ENCODE measurements at regions of chr14 and their contacts with region 1.

Region 1: GRCh38 chr14:21557084-21557901 is 22.6 kb downstream of the OR10G3 start:
- DNase-seq: peak; percentile 69 to 77
- H3K4me3 ChIP-seq: peak overlapping the region; percentile 43 to 44
- H3K27ac ChIP-seq: peak overlapping the region; percentile 49 to 73
- H3K4me1 ChIP-seq: peaks cover 0 to 6% (median 2%) of the 10 kb centered on the region in 4 donors
- H3K27me3 ChIP-seq: no peaks in the 10 kb centered on the region
- CTCF ChIP-seq: peak; percentile 58 to 77

Region 2: GRCh38 chr14:21502926-21503325 is 54.4 kb before region 1 on chr14:
- intact Hi-C with region 1: loop called (anchors 5 kb)
- DNase-seq: no peak
- H3K4me3 ChIP-seq: no peak overlapping the region
- H3K27ac ChIP-seq: no peak overlapping the region
- H3K4me1 ChIP-seq: peaks cover 0 to 6% (median under 1%) of the 10 kb centered on the region in 4 donors
- H3K27me3 ChIP-seq: no peaks in the 10 kb centered on the region
- CTCF ChIP-seq: no peak

Region 3: DNA sequence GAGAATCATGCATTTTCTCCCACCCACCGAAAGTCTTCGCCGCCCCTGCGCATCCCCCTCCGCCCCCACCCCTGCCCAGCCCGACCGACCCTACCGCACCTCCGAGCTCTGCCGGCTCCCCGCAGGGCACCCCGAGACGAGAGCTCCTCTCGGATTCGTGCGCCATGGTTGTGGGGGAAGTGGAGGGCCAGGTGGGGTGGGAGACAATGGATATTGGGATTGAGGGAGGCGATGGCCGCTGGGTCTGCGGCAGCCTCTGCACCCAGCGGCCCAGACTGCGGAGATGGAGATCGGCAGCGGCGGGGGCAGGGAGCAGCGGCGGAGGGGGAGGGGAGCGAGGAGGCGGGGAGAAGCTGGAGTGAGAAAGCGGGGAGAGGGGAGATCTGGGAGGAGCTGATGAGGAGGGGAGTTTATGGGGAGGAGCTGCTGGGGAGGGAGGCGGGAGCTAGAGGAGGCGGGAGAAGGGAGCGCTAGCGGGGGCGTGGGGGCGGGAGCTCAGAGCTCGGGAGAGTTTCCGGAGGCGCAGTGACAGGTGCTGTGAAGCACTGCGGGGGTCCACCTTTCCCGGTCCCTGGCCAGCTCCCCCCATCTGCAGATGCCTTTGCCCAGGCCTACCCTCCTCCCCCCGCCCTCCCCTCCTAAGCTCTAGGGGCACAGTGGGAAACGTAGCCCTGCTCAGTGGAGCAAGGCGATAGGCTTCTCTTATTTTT is 31.2 kb before region 1 on chr14 and contains the start of gene SALL2:
- intact Hi-C with region 1: no loop called
- DNase-seq: peak; percentile 65 to 86
- H3K4me3 ChIP-seq: peak within 1 kb of the TSS; percentile 69 to 96
- H3K27ac ChIP-seq: peak within 1 kb of the TSS; percentile 77 to 79
- H3K4me1 ChIP-seq: peaks cover 0 to 18% (median 9%) of the 10 kb centered on the region in 4 donors
- H3K27me3 ChIP-seq: no peaks in the 10 kb centered on the region
- CTCF ChIP-seq: no peak

Measured in tibial artery (tissue), 4 donors.